Activated CD4-positive, alpha-beta T cell treated with anti-CD3 and anti-CD28 coated beads, Interleukin-2, amount 10 ng/mL, durations not matched to agents 24 days and 14 days (primary cell): ENCODE measurements at regions of chr11 and their contacts with region 1.

Region 1: DNA sequence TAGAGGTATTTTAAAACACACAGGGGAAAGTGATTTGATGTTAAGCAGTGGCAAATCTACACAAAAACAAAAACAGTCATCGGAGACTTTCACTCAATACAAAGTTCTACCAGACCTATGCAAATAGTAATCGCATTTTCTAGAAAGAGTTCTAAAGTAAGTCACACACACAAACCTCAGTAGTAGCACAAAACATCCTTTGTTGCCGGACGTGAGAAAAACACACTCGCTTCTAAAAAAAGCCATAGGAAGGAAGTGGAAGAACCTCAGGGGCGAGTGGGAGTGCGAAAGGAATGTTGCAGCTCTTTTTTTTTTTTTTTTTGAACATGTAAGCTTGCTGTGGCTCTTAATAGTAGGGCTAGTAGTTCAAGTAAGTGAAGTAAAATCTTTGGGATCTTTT is 88.9 kb downstream of the MAML2 start:
- DNase-seq: peak; percentile 83
- H3K4me3 Mint-ChIP-seq: peak overlapping the region; percentile 79
- H3K27ac Mint-ChIP-seq: peak overlapping the region; percentile 84
- H3K4me1 Mint-ChIP-seq: peaks cover 73% of the 10 kb centered on the region
- H3K27me3 Mint-ChIP-seq: no peaks in the 10 kb centered on the region

Region 2: DNA sequence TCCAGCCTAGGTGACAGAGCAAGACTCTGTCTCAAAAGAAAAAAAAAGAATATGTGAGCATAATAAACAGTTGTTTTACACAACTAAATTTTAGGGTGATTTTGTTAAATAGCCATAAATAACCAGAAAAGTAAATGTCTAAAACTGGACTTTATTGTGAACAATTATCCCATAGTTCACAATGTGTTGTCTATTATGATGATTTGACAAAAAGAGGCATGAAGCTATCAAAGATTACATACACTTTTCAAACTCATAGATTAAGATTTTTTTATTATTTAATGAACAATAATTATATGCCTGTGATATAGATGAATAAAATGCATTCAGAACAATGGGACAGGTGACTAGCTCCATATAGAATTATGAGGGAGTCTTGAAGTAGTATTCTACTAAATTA is 303.2 kb before region 1 on chr11:
- intact Hi-C with region 1: no loop called
- DNase-seq: no peak
- H3K4me3 Mint-ChIP-seq: no peak overlapping the region
- H3K27ac Mint-ChIP-seq: no peak overlapping the region
- H3K4me1 Mint-ChIP-seq: no peaks in the 10 kb centered on the region
- H3K27me3 Mint-ChIP-seq: no peaks in the 10 kb centered on the region

Region 3: GRCh38 chr11:96207459-96208449 is 46.3 kb before region 1 on chr11:
- intact Hi-C with region 1: loop called (anchors 2 kb)
- DNase-seq: peak; percentile 78
- H3K4me3 Mint-ChIP-seq: peak overlapping the region; percentile 74
- H3K27ac Mint-ChIP-seq: peak overlapping the region; percentile 93
- H3K4me1 Mint-ChIP-seq: peaks cover 71% of the 10 kb centered on the region
- H3K27me3 Mint-ChIP-seq: no peaks in the 10 kb centered on the region

Region 4: DNA sequence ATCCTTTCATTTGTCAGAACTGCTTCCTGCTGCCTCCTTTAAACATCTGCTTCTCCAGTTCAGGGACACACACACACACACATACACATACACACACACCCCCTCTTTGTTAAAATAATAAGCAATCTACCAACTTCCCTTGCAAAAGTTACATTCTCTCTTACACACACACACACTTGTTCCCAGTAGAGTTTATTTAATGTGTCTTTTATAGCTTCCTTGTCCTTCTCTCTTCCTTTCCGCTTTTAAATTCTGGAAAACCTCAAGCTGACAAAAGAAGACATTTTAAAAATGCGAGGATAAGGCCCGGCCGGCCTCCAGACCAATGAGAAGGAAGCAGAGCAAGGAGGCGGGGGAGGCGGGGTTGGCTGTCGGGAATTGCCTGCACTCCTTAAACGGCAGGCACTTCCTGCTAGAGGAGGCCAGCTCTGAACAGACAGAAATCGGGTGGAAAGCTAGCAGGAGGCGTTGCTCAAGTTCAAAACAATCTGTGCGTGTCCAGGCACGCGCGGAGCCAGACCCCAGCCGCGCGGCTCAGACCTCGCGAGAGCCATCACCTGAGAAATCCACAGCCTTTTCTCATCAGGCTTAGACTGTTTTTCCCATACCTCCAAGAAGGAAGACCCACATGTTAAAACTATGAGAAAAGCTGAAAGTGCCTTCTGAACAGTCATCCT is 11.0 kb before region 1 on chr11:
- intact Hi-C with region 1: loop called (anchors 2 kb)
- DNase-seq: peak; percentile 94
- H3K4me3 Mint-ChIP-seq: peak overlapping the region; percentile 86
- H3K27ac Mint-ChIP-seq: peak overlapping the region; percentile 98
- H3K4me1 Mint-ChIP-seq: peaks cover 48% of the 10 kb centered on the region
- H3K27me3 Mint-ChIP-seq: no peaks in the 10 kb centered on the region

Region 5: GRCh38 chr11:96267496-96268032 is 13.5 kb after region 1 on chr11:
- intact Hi-C with region 1: loop called (anchors 1 kb)
- DNase-seq: peak; percentile 75
- H3K4me3 Mint-ChIP-seq: peak overlapping the region; percentile 44
- H3K27ac Mint-ChIP-seq: peak overlapping the region; percentile 78
- H3K4me1 Mint-ChIP-seq: peaks cover 57% of the 10 kb centered on the region
- H3K27me3 Mint-ChIP-seq: no peaks in the 10 kb centered on the region